HCT116 (cell line): ENCODE measurements at regions of chr3 and their contacts with region 1.

Region 1: DNA sequence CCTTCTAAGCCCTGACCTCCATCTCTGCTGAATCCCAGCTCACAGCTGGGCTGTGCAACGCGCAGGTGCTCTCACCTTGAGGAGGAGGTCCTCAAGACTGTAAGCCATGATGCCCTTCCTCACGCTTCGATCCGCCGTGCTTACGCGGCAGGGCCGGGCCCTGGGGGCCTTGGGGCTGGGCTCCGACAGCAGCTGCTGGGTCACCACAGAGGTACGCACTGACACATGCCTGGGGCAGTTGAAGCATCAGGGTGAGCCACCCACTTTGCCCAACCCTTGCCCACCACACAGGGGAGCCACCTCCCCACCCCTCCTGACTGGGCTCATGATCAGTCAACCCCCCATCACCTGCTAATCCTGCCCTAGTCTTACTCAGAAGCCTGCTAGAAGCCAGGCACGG is 3.1 kb downstream of the CIDEC start:
- DNase-seq: no peak
- ATAC-seq: no peak
- H3K4me3 ChIP-seq: no peak overlapping the region
- H3K27ac ChIP-seq: no peak overlapping the region
- H3K4me1 ChIP-seq: peaks cover 0 to 29% of the 10 kb centered on the region in 2 experiments; a peak in 2 of 4 replicates
- H3K27me3 ChIP-seq: no peaks in the 10 kb centered on the region
- CTCF ChIP-seq: no peak
- POLR2A ChIP-seq: no peak
- RAD21 ChIP-seq: no peak

Region 2: DNA sequence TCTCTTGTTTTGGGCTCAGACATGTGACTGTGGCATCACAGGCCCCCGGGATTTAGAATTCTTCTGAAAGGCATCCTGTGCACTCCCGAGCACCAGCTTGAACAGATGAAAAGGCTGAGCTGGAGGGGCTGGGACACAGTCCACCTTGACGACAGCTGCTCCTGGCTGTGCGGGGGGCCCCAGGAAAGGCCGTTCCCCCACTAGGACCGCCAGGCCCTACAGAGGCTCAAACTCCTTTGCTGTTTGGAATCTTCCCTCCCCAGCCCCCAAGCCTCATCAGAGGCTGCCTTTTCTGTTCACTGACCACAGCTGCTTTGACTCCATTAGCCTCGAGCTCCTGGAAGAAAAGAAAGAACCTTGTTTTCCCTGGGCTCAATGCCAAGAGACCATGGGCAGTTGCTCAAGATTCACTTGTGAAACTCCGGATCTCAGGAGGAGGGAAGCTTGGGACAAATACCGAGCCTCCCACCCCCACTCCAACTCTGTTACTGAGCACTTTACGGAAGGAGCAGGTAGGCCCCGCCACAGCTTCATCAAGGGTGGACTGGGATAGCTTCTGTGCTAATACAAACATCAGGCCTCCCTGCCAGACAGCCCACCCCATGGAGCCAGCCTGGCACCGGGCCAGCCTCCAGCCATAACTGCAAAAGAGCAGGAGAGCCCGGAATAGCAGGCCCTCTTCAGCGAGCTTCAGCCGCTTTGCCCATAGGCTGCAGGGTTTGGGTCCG is 12.6 kb before region 1 on chr3:
- CTCF ChIA-PET with region 1: no interaction called
- POLR2A ChIA-PET with region 1: no interaction called
- RAD21 ChIA-PET with region 1: interaction called in 1 of 2 experiments, 11 read pairs
- intact Hi-C with region 1: no loop called
- DNase-seq: no peak
- ATAC-seq: no peak
- H3K4me3 ChIP-seq: no peak overlapping the region
- H3K27ac ChIP-seq: no peak overlapping the region
- H3K4me1 ChIP-seq: peaks cover 0 to 11% of the 10 kb centered on the region in 2 experiments; a peak in 1 of 4 replicates
- H3K27me3 ChIP-seq: no peaks in the 10 kb centered on the region
- CTCF ChIP-seq: no peak
- POLR2A ChIP-seq: no peak
- RAD21 ChIP-seq: no peak

Region 3: GRCh38 chr3:10445561-10446175 is 568.7 kb after region 1 on chr3:
- CTCF ChIA-PET with region 1: no interaction called
- POLR2A ChIA-PET with region 1: no interaction called
- RAD21 ChIA-PET with region 1: no interaction called
- intact Hi-C with region 1: no loop called
- DNase-seq: no peak
- ATAC-seq: no peak
- H3K4me3 ChIP-seq: no peak overlapping the region
- H3K27ac ChIP-seq: no peak overlapping the region
- H3K4me1 ChIP-seq: peaks cover 0 to 5% of the 10 kb centered on the region in 2 experiments; a peak in 1 of 4 replicates
- H3K27me3 ChIP-seq: peaks cover 17% of the 10 kb centered on the region; the same call in 1 of the 2 replicates
- CTCF ChIP-seq: no peak
- POLR2A ChIP-seq: no peak
- RAD21 ChIP-seq: no peak